AG04449 (cell line): ENCODE measurements at regions of chr16 and their contacts with region 1.

Region 1: DNA sequence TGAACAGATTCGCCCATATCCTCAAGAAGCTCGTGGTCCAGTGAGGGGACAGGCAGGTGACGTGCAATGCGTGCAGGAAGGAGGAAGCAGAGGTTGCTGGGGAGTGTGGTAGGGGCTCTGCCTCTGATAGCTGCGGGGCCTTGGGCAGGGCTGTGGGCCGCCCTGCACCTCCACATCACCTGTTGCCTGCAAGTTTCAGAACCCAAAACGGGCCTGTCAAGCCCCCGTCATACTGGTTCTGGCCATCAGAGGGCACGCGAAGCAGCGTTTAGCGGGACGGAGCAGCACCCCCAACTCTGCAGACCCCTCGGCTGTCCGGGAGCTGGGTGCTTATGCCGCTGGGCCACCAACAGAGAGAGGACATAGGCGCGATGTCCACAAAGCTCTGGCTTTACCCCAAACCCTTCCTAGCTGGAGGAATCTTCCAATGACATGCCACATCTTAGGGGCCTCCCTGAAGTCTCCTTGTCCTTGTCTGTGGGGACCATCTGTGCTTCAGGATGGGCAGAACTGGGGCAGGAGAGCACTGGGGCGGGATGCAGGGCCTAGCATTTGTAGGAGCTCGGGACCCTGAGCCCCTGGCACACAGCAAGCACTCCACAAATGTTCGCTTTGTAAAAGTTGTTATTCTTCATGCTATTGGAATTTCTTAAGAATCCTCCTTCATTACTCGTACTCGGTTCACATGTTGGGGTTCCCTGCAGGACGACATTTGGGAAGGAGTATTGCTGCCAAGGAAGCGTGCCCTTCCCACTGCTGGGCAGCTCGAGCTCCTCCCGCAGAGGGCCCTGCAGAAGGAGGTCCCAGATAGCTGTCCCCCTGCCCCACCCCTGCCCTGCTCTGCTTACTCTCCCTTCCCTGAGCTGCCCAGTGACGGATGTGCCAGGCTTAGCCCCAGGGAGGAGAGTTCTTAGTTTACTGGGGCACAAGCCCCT is 64.3 kb downstream of the CNGB1 start:
- DNase-seq: no peak
- H3K4me3 ChIP-seq: no peak overlapping the region
- CTCF ChIP-seq: peak; percentile 47

Region 2: GRCh38 chr16:57871456-57871855 is 35.2 kb before region 1 on chr16:
- CTCF ChIA-PET with region 1: no interaction called
- POLR2A ChIA-PET with region 1: no interaction called
- DNase-seq: no peak
- H3K4me3 ChIP-seq: no peak overlapping the region
- CTCF ChIP-seq: no peak

Region 3: GRCh38 chr16:57916735-57917451 is 10.2 kb after region 1 on chr16:
- CTCF ChIA-PET with region 1: interaction called, 12 read pairs
- POLR2A ChIA-PET with region 1: no interaction called
- DNase-seq: no peak
- H3K4me3 ChIP-seq: no peak overlapping the region
- CTCF ChIP-seq: no peak